Cardiac septum (tissue), 1 donor: ENCODE measurements at regions of chr15 and their contacts with region 1.

Region 1: DNA sequence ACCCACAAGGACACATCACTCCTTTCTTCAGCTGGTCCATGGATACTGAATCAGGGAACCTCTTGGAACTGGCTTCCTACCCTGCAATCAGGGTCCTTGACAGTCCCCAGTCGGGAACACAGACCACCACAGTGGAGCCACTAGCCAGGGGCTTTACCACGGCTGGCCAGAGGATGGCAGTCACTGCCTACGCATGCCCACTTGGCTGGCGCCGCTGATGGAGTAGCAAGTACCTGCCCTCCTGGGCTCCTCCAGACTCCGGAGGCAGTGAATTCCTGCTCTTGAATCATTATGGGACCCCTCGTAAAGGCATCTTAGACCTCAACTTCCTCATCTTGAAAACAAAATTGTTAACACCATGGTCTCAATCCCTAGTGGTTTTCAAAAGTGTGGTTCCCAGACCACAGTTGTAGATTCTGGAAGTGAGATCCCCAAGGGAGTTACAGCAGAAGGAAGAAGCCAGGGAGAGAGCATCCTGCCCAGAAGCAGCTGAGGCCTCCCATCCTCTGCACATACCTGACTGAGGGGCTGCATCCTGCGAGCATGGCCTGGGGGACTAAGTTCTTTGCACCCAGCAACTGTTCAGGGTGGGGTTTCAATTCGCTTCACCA is 9.1 kb upstream of the SKIC8 start:
- DNase-seq: peak; percentile 85

Region 2: DNA sequence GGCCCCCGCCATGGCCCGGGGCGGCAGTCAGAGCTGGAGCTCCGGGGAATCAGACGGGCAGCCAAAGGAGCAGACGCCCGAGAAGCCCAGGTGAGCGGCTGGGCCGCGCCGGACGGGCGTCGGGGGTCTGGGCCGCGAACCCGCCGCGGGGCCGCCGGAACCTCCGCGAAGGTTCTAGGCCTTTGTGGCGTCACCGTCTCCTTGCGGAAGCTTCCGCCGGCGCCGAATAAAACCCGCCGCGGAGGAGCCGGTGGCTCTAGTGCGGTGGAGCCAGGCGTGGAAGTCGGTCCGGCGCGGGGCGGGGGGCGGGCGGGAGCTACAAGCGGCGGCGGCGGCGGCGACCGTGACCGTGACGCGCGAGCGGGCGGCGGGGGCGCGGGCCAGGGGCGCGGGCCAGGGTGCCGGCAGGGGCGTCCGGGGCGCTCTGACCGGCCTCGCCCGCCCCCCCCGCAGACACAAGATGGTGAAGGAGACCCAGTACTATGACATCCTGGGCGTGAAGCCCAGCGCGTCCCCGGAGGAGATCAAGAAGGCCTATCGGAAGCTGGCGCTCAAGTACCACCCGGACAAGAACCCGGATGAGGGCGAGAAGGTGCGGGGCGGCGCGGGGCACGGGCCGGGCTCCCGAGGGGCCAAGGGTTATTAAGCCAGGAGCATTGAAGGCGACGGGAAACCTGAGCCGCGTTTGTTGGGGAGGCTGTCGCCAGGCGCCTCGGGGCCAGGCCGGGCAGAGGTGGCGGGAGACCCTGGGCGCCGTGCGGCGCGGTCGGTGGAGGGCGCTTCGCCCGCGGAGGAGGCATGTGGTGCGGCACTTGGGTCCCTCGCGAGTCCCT is 44.0 kb before region 1 on chr15 and contains the start of gene DNAJA4:
- intact Hi-C with region 1: no loop called
- DNase-seq: peak; percentile 84
- total RNA-seq, gene DNAJA4: 150 TPM

Region 3: DNA sequence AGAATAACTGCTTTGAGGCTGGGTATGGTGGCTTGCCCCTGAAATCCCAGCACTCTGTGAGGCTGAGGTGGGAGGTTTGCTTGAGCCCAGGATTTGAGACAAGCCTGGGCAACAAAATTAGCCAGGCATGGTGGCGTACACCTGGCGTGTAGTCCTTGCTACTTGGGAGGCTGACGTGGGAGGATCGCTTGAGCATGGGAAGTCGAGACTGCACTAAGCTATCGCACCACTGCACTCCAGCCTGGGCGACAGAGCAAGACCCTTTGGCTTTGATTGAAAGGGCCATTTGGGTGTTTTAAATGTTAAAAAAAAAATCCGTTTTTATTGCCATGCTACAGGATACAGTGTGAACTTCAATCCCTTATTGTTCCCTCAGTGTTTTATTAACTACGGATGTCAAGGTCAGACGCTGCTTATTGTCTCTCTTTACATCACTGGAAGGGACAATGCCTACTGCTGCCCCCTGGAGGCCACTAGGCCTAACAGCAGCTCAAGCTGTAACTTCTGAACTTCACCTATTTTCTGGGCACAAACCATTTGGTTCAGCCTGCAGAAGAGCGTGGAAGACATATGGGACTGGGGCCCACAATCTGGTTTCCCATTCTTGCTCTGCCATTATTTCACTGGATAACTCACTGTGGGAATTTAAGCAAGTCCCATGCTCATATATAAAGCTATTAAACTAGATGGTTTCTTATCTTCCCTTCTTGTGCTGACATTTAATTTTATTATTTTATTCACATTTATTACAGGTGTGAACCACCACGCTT is 114.2 kb after region 1 on chr15:
- intact Hi-C with region 1: loop called (anchors 2 kb)
- DNase-seq: no peak

Region 4: DNA sequence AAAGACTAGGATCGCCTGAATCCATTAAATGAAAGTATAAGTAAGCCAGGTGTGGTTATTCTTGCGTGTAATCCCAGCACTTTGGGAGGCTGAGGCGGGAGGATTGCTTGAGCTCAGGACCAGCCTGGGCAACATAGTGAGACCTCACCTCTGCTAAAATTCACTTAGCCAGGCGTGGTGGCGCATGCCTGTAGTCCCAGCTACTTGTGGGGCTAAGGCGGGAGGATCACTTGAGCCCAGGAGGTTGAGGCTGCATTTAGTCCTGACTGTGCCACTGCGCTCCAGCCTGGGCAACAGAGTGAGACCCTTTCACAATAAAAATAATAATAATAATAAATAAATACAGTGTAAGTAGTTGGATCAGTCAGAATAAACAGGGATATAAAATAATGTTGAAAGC is 173.4 kb after region 1 on chr15:
- intact Hi-C with region 1: loop called (anchors 2 kb)
- DNase-seq: no peak